GM18951 (cell line): ENCODE measurements at regions of chr2 and their contacts with region 1.

Region 1: DNA sequence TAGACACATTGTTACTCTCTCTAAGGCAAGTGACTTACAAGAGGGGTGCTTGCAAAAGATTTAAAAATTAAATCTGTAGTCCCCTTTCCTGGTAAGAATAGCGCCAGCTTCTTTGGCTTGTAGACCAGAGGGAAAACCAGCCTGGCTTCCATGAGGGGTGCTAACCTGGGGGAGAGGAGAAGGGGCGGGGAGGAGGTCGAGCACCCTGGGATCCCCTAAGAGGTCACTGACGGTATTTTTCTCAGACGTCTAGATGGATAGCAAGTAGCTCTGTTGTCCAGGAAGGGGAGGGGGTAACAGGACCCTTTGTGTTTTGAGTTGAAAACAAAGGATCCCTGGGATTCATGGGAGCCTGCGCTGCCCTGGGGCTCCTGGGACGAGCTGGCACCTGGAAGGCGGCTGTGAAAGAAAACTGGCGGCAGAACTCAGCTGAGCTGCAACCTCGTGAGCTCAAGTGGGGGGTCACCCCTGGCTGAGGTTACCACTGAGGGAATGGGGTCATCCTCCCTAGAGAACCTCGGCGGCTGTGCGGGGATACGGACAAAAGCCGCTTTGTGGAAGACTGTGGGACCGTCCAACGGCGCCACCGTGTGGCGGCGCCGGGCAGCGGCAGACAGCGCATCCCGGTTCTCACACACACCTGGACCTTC is 37.8 kb upstream of the MRPL19 start:
- POLR2A ChIP-seq: no peak

Region 2: DNA sequence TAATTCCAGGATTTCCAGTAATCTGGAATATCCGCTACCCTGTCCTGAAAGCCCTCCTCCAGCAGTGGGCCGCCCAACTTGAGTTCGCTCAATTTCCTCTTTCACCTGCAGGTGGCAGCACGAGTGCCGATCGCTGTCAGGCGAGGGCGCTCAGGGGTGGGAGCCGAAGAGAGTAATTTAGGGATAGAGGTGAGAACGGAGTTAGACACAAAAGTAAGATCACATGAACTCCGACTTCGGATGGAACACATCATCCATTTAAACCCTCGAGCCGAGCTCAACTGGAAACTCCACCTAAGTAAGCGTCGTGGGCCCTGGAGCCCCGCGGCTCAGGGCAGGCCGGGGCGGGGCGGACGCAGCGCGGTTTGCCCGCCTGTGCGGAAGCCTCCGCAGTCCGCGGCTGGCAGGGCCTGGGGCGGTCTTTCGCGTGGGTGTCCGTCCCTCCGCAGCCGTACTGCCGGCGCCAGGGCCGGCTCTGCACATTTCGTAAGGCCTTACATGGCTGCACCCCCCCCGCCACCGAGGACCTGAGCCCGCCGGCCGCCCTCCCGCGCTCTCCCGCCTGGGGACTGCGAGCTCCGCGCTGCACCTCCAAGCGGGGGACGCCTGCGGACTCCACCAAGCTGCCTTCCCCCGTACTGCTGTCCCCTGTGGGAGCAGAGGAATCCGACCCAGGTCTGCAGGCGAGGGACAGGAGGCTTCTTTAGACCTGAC is 893.6 kb before region 1 on chr2:
- in situ Hi-C with region 1: loop called (anchors 25 kb)
- POLR2A ChIP-seq: no peak